Common myeloid progenitor, CD34-positive (primary cell): ENCODE measurements at regions of chr13 and their contacts with region 1.

Region 1: GRCh38 chr13:48233046-48233907 is at the start of gene ITM2B:
- DNase-seq: peak; percentile 66 to 75 (median 75)
- H3K4me3 ChIP-seq: peak within 1 kb of the TSS; percentile 87 to 100 (median 99)
- H3K27ac ChIP-seq: peak within 1 kb of the TSS; percentile 92 to 97
- H3K4me1 ChIP-seq: peaks cover 24 to 45% (median 37%) of the 10 kb centered on the region in 4 experiments
- H3K27me3 ChIP-seq: no peaks in the 10 kb centered on the region

Region 2: DNA sequence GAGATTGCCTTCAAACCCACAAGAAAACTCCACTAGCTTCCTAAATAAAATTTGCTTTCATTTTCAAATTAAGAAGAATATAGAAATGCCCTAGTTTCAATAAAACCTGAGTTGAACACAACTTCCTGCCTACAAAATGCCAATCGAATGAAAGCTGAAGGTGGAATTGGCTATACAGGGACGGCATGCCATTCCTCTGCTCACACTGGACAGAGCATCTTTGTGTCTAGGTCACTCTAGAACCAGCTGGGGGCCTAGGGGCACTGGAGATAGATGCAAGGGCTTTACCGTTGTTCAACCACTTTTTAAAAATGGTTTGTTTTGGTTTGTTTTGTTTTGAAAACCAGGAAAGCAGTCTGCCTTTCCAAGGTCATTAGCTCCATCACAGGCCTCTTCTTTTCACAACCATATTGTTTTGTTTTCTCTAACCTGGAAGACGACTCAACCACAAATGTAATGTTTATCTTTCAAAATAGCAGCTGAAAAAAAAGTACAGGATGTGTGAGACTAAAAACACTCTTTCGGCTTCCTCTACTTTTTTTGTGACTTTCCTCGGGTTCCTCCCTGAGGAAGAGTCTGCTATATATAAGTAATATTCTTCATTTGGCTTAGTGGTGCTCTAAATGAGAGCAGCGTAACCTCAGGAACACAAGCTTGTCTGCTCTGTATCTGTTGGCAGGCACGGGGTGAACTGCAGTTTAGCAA is 12.1 kb before region 1 on chr13:
- CTCF ChIA-PET with region 1: interaction called, 10 read pairs
- POLR2A ChIA-PET with region 1: interaction called, 4 read pairs
- DNase-seq: peak in 2 of 3 donors; percentile 50 to 69
- H3K4me3 ChIP-seq: peak overlapping the region in 5 of 7 experiments; percentile 20 to 72 (median 50)
- H3K27ac ChIP-seq: peak overlapping the region; percentile 9 to 71
- H3K4me1 ChIP-seq: peaks cover 18 to 30% (median 25%) of the 10 kb centered on the region in 4 experiments
- H3K27me3 ChIP-seq: no peaks in the 10 kb centered on the region